Activated CD8-positive, alpha-beta T cell treated with anti-CD3 and anti-CD28 coated beads, Interleukin-2, amount 10 ng/mL, durations not matched to agents 7 days and 5 days (primary cell): ENCODE measurements at regions of chr18 and their contacts with region 1.

Region 1: DNA sequence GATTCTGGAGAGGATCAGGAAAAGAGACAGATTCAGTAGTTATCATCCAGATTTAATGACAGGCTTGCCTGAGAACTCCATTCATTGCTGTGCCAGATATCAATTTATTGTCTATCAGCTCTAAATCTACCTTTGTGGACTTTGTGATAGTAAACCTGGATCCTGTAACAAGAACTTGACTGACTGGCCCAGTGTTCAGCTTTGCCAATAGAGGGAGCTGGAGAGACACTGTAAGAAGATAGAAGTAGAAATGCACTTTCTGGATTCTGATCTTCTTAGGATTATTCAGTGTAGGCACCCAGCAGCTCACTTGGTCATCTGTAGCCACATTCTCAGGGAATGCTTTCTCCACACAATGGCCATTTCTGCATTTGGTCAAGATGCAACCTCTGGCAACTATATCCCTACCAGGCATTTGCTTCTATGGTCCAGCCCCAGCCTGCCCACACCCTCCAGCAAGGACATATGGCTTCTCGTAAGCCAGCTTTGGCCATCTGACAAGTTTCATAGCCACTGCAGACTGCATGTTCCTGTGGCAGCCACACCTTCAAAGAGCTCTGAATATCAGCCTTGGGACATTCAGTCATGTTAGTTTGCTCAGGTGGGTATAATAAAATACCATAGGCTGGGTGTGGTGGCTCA is 6.1 kb upstream of the SERPINB8 start:
- DNase-seq: peak; percentile 59
- ATAC-seq: peak; percentile 81
- H3K4me3 Mint-ChIP-seq: no peak overlapping the region
- H3K27ac Mint-ChIP-seq: no peak overlapping the region
- H3K4me1 Mint-ChIP-seq: no peaks in the 10 kb centered on the region
- H3K27me3 Mint-ChIP-seq: peaks cover 20% of the 10 kb centered on the region

Region 2: DNA sequence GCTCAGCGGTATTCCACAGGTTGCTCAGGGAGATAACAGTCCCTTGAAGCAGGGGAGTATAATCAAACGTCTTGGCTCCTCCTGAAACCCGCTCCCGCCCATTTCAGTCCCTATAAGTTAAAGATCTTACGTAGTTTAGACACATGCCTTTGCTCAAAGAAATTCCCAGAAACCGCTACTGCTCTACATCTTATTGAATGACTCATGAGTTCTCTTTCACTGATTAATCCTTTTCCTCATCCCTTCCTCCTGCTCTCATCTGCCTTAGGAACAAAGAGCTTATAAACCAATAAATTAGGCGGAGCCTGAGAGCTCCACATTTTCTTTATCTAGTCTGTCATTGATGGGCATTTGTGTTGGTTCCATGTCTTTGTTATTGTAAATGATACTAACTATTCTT is 315.5 kb before region 1 on chr18:
- CTCF ChIA-PET with region 1: no interaction called
- POLR2A ChIA-PET with region 1: no interaction called
- DNase-seq: no peak
- ATAC-seq: no peak
- H3K4me3 Mint-ChIP-seq: no peak overlapping the region
- H3K27ac Mint-ChIP-seq: no peak overlapping the region
- H3K4me1 Mint-ChIP-seq: no peaks in the 10 kb centered on the region
- H3K27me3 Mint-ChIP-seq: no peaks in the 10 kb centered on the region

Region 3: DNA sequence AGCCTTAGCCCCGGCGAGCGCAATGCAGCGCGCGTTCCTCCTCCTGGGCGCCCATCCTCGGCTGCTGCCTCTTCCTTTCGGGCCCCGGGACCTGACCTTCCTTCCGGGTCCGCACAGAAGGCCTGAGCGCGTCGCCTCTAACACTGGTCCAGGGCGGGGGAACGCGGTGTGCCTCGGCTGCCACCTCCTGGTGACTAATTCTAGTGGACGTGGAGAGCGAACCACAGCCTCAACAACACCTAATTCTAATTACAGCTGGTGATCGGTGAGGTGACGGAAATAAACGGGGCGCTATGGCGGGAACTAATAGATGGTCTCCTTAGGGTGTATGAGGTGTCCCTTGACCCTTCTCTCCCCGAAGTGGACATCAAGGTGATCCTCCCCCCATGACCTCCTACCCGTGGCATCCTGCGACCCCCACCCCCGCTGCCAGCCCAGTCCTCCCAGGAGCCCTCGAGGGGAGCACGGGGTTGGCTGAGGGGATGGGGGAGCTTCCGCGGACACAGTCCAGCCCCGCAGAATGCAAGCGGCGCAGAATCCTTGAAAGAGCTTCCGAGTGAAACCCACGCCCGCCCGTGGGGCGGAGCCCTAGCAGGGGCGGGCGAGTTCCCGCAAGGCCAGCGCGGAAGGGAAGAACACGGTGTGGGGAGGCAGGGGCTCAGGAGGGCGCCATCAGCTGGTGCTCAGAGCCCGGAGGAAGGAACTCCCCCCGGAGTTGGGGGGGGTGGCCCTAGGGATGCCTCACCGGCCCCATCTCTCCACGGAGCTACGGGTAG is 27.4 kb before region 1 on chr18:
- CTCF ChIA-PET with region 1: interaction called, 28 read pairs
- POLR2A ChIA-PET with region 1: no interaction called
- DNase-seq: peak; percentile 72
- ATAC-seq: peak; percentile 95
- H3K4me3 Mint-ChIP-seq: peak overlapping the region; percentile 56
- H3K27ac Mint-ChIP-seq: no peak overlapping the region
- H3K4me1 Mint-ChIP-seq: peaks cover 5% of the 10 kb centered on the region
- H3K27me3 Mint-ChIP-seq: peaks cover 21% of the 10 kb centered on the region

Region 4: DNA sequence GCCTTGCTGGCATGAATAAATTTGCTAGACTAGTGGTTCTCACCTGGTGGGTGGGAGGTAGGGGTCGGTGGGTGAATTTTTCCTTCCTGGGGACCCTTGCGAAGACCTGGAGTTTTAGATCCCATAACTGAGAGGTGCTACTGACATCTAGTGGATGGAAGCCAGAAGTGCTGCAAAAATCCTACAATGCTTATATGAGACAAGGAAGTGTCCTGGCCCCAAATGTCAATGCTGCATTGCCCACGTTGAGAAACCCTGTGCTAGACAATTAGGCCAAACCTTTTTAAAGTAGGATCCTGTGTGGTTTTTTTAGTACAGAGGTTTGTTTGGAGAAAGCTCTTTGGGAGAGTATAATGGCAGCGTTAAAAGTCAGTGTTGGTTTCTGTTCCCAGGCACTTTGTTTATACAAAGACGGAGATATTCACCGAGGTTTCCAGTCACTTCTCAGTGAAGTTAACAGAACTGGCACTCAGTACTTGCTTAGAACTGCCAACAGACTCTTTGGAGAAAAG is 15.7 kb after region 1 on chr18:
- CTCF ChIA-PET with region 1: interaction called, 50 read pairs
- POLR2A ChIA-PET with region 1: no interaction called
- DNase-seq: peak; percentile 56
- ATAC-seq: peak; percentile 78
- H3K4me3 Mint-ChIP-seq: peak overlapping the region; percentile 10
- H3K27ac Mint-ChIP-seq: no peak overlapping the region
- H3K4me1 Mint-ChIP-seq: peaks cover 10% of the 10 kb centered on the region
- H3K27me3 Mint-ChIP-seq: no peaks in the 10 kb centered on the region

Region 5: DNA sequence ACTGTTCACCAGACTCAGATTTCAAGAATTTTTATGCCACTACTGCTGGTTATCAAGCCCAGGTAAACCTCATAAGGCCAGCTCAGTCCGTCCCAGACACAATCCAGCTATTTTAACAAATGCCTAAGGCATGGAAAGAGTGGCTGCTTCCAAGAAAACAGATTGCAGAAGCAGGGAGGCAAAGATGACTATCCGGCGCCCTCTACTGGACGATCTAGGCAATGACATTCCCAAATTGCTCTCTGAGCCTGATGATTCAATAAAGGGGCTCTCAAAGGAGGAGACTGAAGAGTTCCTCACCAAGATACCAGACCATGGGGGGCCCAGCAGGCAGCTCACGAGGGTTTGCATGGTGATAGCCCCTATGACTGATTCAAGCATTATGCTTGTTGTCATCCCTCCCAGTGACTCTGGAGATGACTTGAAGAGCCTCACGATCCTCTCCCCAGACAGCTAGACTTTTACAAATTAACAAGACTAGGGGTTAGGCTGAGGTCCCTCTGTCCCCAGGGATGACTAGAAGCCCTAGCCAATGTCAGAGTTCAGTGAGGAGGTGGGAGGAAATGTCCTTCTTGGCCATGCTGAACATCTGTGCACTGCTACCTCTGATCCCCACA is 31.2 kb after region 1 on chr18:
- CTCF ChIA-PET with region 1: interaction called, 25 read pairs
- POLR2A ChIA-PET with region 1: no interaction called
- DNase-seq: peak; percentile 48
- ATAC-seq: no peak
- H3K4me3 Mint-ChIP-seq: no peak overlapping the region
- H3K27ac Mint-ChIP-seq: no peak overlapping the region
- H3K4me1 Mint-ChIP-seq: no peaks in the 10 kb centered on the region
- H3K27me3 Mint-ChIP-seq: no peaks in the 10 kb centered on the region